HCT116 (cell line): ENCODE measurements at regions of chr2 and their contacts with region 1.

Region 1: DNA sequence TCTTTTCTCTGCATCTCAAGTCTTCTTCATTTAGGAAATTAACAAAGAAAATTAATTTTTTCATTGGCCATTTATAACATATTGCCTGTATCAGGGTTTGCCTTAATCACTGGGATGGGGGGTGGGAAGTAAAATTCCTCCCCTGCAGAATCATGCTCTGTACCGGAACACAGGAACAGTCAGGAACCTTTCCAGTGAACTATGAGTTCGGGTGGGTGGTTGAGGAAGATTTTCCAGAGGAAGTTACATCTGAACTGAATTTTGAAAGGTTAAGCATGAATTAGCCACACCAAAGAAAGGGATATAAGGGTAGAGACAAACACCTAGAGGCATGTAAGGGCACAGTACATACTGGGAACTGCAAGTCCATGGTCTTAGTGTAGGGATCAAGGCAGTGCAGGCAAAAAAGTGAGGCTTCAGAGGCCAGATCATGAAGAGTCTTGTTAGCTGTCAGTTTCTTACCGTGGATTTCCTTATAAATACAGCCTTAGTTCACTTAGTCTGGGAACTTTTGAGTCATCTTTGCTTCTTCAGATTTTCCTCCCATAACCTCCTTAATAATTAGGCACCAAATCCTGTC is 55.6 kb downstream of the FAM117B start:
- DNase-seq: no peak
- ATAC-seq: 0 out of 2 replicates have a peak, but pooled peaks have one; percentile 40
- H3K4me3 ChIP-seq: no peak overlapping the region
- H3K27ac ChIP-seq: no peak overlapping the region
- H3K4me1 ChIP-seq: peaks cover 0 to 8% of the 10 kb centered on the region in 2 experiments; a peak in 2 of 4 replicates
- H3K27me3 ChIP-seq: no peaks in the 10 kb centered on the region
- CTCF ChIP-seq: no peak
- POLR2A ChIP-seq: no peak
- RAD21 ChIP-seq: no peak

Region 2: DNA sequence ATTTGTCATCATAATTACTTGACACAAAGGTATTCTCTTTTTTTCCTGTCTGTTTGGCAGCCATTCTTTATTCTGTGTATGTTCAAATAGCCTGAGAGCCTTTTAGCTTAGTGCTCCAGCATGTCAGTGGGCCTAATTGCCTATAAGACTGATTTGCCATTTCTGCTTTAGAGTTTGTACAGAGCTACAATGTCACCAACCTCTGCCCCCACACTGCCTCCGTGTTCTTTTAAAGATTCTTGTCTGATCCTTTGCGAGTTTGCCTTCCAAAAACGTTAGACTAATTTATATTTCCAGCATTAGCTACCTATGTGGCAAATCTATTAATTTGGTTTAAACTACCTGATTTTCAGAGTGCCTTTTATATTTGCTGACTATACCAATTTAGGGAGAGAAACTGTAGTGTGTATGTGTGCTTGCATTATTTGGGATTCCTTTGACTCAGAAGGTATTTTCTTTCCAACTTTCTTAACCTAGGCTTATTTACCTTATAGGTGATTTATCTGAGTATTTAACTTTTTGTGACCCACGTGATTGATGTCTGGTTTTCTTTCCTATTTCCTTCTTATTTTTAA is 15.1 kb after region 1 on chr2:
- CTCF ChIA-PET with region 1: no interaction called
- POLR2A ChIA-PET with region 1: no interaction called
- RAD21 ChIA-PET with region 1: no interaction called
- intact Hi-C with region 1: loop called (anchors 1 kb)
- DNase-seq: no peak
- ATAC-seq: no peak
- H3K4me3 ChIP-seq: no peak overlapping the region
- H3K27ac ChIP-seq: no peak overlapping the region
- H3K4me1 ChIP-seq: no peaks in the 10 kb centered on the region
- H3K27me3 ChIP-seq: no peaks in the 10 kb centered on the region
- CTCF ChIP-seq: no peak
- POLR2A ChIP-seq: no peak
- RAD21 ChIP-seq: no peak